ENCODE measurements at regions of chr15 and their contacts with region 1.

Region 1: DNA sequence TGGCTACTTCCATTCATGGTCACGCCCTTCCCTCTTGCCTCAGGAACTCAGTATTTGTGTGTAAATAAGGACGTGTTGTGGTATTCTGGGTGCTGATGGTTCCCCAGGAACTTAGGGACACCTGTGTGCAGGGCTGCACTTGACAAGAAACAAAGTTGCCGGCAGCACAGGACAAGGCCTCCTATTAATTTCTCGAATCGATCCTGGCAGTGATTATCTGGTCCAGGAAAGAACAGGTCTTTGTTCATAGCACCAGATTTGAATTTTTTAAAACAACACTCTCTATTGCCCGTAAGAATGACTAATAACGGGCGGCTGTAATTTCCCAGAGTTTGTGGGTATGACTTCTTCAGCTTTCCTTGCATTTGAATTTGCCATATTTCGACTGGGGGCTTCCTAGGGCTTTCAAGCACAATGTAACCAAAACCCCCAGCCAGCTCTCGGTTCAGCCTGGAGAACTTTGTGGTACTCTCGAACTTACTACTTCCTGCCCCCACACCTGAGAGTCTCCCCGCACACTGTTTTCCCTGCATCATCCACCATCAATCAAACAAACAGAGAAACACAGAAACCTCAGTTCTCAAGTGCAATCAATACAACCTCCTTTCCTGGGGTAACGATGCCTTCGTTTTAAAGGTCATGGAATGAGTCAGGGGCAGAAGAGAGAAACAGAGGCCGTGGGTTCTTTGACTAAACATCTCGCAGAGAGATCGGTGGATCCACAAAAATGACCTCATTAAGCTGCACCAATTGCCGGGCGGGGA is 241.7 kb upstream of the ICE2 start:
- DNase-seq: peak; percentile 86
- H3K4me3 Mint-ChIP-seq: peak overlapping the region; percentile 65
- H3K27ac Mint-ChIP-seq: peak overlapping the region; percentile 95
- H3K4me1 Mint-ChIP-seq: peaks cover 64% of the 10 kb centered on the region
- H3K27me3 Mint-ChIP-seq: no peaks in the 10 kb centered on the region

Region 2: GRCh38 chr15:60507596-60508424 is 212.9 kb before region 1 on chr15:
- CTCF ChIA-PET with region 1: no interaction called
- POLR2A ChIA-PET with region 1: no interaction called
- intact Hi-C with region 1: loop called (anchors 5 kb)
- DNase-seq: peak; percentile 56
- H3K4me3 Mint-ChIP-seq: no peak overlapping the region
- H3K27ac Mint-ChIP-seq: peak overlapping the region; percentile 69
- H3K4me1 Mint-ChIP-seq: peaks cover 56% of the 10 kb centered on the region
- H3K27me3 Mint-ChIP-seq: no peaks in the 10 kb centered on the region

Region 3: DNA sequence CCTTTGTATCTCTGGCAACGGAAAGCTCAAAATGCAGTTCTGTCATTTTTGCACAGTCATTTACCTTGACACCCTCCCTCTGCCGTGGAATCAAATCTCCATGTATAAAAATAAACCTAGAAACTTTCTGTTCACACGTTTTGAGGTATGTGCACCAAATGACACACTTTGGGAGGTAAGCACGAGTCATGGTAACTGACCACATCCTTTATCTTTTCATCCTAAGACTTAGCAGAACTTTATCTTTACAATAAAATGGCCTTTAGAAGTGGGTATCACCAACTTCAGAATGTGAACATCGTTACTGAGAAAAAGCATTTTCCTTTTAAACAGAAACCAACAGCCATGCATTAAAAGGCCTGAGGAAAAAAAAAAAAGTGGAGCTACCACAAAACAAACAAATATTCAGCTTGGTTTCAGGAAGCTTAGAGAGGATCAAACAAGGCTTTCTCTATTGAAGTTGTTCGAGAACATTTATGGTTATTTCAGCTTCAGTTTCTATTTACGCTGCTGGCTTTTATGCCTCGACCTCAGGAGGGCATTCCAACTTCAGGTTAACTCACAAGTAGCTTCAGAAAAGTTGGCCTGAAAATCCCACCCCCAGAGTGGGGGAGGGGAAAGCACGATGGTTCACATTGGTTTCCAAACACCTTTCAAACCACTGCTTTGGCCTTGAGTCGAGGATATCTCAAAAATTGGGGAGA is 70.7 kb before region 1 on chr15:
- CTCF ChIA-PET with region 1: interaction called, 6 read pairs
- POLR2A ChIA-PET with region 1: interaction called, 19 read pairs
- intact Hi-C with region 1: loop called (anchors 1 kb)
- DNase-seq: peak; percentile 68
- H3K4me3 Mint-ChIP-seq: peak overlapping the region; percentile 54
- H3K27ac Mint-ChIP-seq: peak overlapping the region; percentile 87
- H3K4me1 Mint-ChIP-seq: peaks cover 58% of the 10 kb centered on the region
- H3K27me3 Mint-ChIP-seq: no peaks in the 10 kb centered on the region

Region 4: DNA sequence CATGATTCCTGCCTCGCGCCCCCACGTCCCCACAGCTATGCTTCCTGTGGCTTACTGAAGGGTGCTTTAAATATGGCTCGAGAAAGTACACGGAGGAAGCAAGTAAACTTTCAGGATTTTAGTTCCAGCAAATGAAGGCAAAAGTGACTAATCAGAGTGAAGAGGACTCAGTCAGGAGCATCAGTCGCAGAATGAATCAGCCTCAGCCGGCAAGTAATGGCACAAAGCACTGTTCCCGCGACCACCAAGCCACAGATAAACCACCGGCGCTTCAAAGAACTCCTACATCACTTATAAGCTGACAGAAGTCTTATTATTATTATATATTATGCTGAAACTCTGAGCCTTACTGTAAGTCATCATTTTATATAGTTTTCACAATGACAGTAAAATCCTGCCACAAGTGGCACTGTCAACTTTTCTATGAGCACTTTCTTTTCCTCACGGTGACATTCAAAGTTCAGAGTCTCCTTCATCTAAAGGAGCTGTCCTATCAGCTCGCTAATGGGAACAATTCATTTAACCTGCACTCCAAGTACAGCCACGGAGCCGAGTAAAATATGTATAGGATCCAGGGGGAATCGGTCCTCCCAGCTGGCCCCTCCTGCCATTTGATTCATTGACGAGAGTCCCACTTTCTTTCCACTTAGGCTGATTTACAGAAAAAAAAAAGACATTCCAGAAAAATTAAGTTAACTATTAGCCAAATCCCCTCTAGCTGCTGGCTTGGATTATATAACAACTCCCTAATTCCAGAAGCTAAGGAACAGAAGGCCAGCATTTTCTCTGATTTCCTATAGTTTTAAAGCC is 24.8 kb before region 1 on chr15:
- CTCF ChIA-PET with region 1: interaction called, 10 read pairs
- POLR2A ChIA-PET with region 1: interaction called, 18 read pairs
- intact Hi-C with region 1: loop called (anchors 1 kb)
- DNase-seq: peak; percentile 95
- H3K4me3 Mint-ChIP-seq: peak overlapping the region; percentile 57
- H3K27ac Mint-ChIP-seq: peak overlapping the region; percentile 80
- H3K4me1 Mint-ChIP-seq: peaks cover 84% of the 10 kb centered on the region
- H3K27me3 Mint-ChIP-seq: no peaks in the 10 kb centered on the region

Region 5: DNA sequence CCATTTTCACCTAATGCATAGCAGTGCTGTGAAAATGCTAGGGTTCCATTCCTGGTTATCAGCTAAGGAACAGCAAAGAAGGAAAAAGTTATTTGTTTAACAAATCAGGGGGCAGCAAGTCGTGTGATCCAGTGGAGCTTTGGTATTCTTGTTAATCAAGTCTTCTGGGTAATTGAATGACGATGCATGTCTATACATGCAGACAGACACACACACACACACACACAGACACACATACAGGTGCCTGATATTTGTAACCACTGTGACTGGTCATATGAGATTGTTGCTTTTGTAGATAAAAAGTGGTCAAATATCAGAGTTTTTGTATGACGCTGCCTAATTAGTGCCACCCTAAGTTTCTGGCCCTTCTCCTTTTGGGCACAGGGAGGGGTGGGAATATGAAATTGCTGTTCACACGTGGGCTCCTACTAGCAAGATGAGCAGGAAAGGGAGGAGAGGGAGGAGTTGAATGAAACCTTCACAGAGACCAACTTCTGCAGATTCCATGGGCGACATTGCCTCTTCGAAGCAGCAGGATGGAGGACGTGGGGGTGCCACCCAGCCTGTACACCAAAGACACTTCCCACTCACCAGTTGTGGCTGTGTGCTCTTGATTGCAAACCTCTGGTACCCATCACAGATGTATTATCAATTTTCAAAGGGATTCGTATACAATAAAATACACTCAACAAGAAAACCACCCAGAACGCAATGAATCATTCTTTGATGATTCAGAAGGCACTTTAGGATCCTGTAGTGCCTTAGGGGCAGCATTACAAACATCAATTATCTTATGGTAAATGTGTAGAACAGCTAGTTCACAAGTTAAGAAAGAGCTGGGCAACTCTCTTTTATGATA is 40.2 kb after region 1 on chr15:
- CTCF ChIA-PET with region 1: no interaction called
- POLR2A ChIA-PET with region 1: interaction called, 11 read pairs
- intact Hi-C with region 1: no loop called
- DNase-seq: peak; percentile 51
- H3K4me3 Mint-ChIP-seq: peak overlapping the region; percentile 27
- H3K27ac Mint-ChIP-seq: peak overlapping the region; percentile 44
- H3K4me1 Mint-ChIP-seq: peaks cover 35% of the 10 kb centered on the region
- H3K27me3 Mint-ChIP-seq: no peaks in the 10 kb centered on the region

Region 6: DNA sequence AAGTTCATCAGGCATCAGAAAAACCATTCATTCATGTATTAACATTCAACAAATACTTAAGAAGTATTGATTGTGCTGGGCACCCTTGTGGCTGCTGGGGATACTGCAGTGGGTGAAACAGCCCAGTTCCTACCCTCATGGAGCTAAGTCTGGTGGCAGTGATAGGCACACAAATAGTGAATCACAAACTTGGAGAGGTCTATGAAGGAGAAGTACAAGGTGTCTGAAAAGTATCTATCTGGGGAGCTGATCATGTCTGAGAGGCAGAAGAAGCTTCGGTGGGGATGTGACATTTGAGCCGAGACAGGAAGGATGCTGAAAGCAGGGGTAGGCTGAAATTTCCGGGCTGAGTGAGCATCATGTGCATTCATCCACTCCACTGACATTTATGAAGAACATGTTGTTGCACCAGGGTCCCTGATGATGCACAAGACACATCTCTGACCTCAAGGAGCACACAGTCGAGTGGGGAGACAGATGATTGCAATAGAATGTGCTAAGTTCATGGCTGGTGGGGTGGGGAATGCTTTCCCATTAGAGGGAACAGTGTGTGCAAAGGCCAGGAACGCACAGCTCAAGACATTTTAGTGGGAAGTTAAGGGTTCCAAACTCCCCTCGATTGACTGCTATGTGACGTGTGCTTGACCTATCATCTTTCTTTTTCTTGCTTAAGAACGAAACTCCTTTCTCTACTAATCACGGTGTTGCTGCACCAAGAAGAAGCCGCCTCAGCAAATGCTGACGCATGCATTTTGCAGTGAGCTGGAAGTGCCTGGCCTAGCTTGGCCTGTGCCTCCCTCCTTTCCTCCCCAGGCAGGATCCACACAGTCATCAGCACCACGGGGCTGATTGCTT is 67.4 kb after region 1 on chr15:
- CTCF ChIA-PET with region 1: interaction called, 28 read pairs
- POLR2A ChIA-PET with region 1: interaction called, 5 read pairs
- intact Hi-C with region 1: no loop called
- DNase-seq: peak; percentile 77
- H3K4me3 Mint-ChIP-seq: peak overlapping the region; percentile 13
- H3K27ac Mint-ChIP-seq: peak overlapping the region; percentile 79
- H3K4me1 Mint-ChIP-seq: peaks cover 72% of the 10 kb centered on the region
- H3K27me3 Mint-ChIP-seq: no peaks in the 10 kb centered on the region

Region 7: GRCh38 chr15:60840306-60840702 is 119.6 kb after region 1 on chr15:
- CTCF ChIA-PET with region 1: interaction called, 5 read pairs
- POLR2A ChIA-PET with region 1: interaction called, 3 read pairs
- intact Hi-C with region 1: loop called (anchors 2 kb)
- DNase-seq: peak; percentile 36
- H3K4me3 Mint-ChIP-seq: peak overlapping the region; percentile 68
- H3K27ac Mint-ChIP-seq: peak overlapping the region; percentile 74
- H3K4me1 Mint-ChIP-seq: peaks cover 74% of the 10 kb centered on the region
- H3K27me3 Mint-ChIP-seq: peaks cover 3% of the 10 kb centered on the region